ENCODE measurements at regions of chr22 and their contacts with region 1.

Region 1: GRCh38 chr22:23495614-23496444 is 84.3 kb downstream of the IGLL1 start:
- DNase-seq: no peak
- H3K4me3 ChIP-seq: no peak overlapping the region
- H3K27ac ChIP-seq: no peak overlapping the region
- H3K4me1 ChIP-seq: no peaks in the 10 kb centered on the region
- H3K27me3 ChIP-seq: peaks cover 73% of the 10 kb centered on the region
- CTCF ChIP-seq: no peak

Region 2: GRCh38 chr22:23574371-23574811 is 78.6 kb after region 1 on chr22:
- CTCF ChIA-PET with region 1: interaction called, 12 read pairs
- POLR2A ChIA-PET with region 1: no interaction called
- intact Hi-C with region 1: no loop called
- DNase-seq: no peak
- H3K4me3 ChIP-seq: no peak overlapping the region
- H3K27ac ChIP-seq: no peak overlapping the region
- H3K4me1 ChIP-seq: no peaks in the 10 kb centered on the region
- H3K27me3 ChIP-seq: peaks cover 67% of the 10 kb centered on the region
- CTCF ChIP-seq: no peak

Region 3: GRCh38 chr22:23655891-23656475 is 160.2 kb after region 1 on chr22:
- CTCF ChIA-PET with region 1: no interaction called
- POLR2A ChIA-PET with region 1: no interaction called
- intact Hi-C with region 1: no loop called
- DNase-seq: no peak
- H3K4me3 ChIP-seq: no peak overlapping the region
- H3K27ac ChIP-seq: no peak overlapping the region
- H3K4me1 ChIP-seq: no peaks in the 10 kb centered on the region
- H3K27me3 ChIP-seq: no peaks in the 10 kb centered on the region
- CTCF ChIP-seq: no peak

Region 4: DNA sequence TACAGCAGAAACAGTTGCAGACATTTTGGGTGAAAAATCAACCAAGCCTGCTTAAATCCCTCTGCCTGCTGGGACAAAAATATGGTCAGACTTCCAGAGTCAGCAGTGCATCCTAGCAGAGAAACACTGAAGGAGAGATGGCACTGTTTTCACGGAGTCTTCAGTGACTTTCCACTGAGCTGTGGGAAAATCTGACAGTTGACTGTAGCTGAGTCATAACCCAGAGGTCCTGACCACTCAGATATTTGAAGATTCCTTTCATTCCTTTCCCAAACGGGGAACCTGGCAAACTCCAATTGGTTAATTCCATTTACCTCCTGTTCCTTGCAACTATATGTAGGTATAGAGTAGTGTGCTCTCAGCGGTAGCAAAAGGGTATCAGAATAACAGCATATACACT is 978.4 kb after region 1 on chr22:
- CTCF ChIA-PET with region 1: interaction called, 29 read pairs
- POLR2A ChIA-PET with region 1: no interaction called
- intact Hi-C with region 1: no loop called
- DNase-seq: peak; percentile 33 to 94
- H3K4me3 ChIP-seq: no peak overlapping the region
- H3K27ac ChIP-seq: peak overlapping the region; percentile 87
- H3K4me1 ChIP-seq: peaks cover 25% of the 10 kb centered on the region
- H3K27me3 ChIP-seq: no peaks in the 10 kb centered on the region
- CTCF ChIP-seq: no peak

Measured in PC-9 (cell line).